ENCODE measurements at regions of chr10 and their contacts with region 1.

Region 1: DNA sequence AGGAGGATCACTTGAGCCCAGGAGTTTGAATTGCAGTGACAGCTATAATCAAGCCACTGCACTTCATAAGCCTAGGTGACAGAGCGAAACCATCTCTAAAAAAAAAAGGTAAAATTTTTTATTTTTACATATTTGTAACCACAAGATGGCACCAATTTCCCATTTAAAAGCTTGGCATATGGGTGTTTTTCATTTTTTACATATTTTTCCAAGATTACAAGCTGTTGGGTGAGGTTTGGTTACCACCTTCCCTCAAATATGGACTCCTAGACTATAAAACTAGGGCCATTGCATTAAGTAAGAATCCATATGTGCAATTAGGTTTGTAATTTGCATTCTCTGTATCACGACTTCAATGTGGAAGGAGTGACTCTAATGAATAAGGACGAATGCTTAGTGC is 129.3 kb upstream of the ACBD5 start:
- DNase-seq: peak in 1 of 4 experiments; percentile 9
- ATAC-seq: no peak
- H3K4me3 ChIP-seq: no peak overlapping the region
- H3K27ac ChIP-seq: no peak overlapping the region
- H3K4me1 ChIP-seq: no peaks in the 10 kb centered on the region
- H3K27me3 ChIP-seq: 0 out of 5 replicates have a peak, but pooled peaks cover 0 to 5% of the 10 kb centered on the region in 2 experiments
- CTCF ChIP-seq: peak in 1 of 3 experiments; percentile 47; a peak in 2 of 6 replicates
- EP300 ChIP-seq: no peak
- POLR2A ChIP-seq: no peak
- RAD21 ChIP-seq: peak; percentile 43 to 52

Region 2: GRCh38 chr10:26574783-26575182 is 795.1 kb before region 1 on chr10:
- CTCF ChIA-PET with region 1: no interaction called
- POLR2A ChIA-PET with region 1: no interaction called
- in situ Hi-C with region 1: no loop called
- intact Hi-C with region 1: no loop called
- DNase-seq: no peak
- ATAC-seq: no peak
- H3K4me3 ChIP-seq: no peak overlapping the region
- H3K27ac ChIP-seq: no peak overlapping the region
- H3K4me1 ChIP-seq: peaks cover 0 to 5% of the 10 kb centered on the region in 2 experiments; a peak in 1 of 5 replicates
- H3K27me3 ChIP-seq: peaks cover 3 to 5% of the 10 kb centered on the region in 2 experiments; a peak in 3 of 5 replicates
- CTCF ChIP-seq: no peak
- EP300 ChIP-seq: no peak
- POLR2A ChIP-seq: no peak
- RAD21 ChIP-seq: no peak

Region 3: DNA sequence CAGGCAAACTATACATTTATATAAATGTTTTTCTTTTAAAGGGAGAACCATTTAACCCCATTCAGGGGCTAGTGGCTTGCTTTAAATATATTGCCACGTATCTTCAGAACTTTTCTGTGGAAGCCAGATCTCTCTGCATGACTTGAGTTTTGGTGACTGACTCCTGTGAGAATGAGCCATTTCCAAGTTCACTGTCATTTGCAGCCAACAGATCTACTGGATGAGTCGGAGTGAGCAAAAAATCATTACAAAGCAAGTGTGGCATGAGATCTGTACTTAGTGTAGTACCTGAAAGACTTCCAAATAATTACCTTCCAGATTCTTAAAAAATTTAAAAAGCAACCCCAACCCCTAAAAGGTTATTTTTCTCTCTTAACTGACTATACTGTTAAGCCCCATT is 626.8 kb before region 1 on chr10:
- CTCF ChIA-PET with region 1: no interaction called
- POLR2A ChIA-PET with region 1: no interaction called
- in situ Hi-C with region 1: loop called (anchors 10 kb)
- intact Hi-C with region 1: no loop called
- DNase-seq: no peak
- ATAC-seq: no peak
- H3K4me3 ChIP-seq: no peak overlapping the region
- H3K27ac ChIP-seq: no peak overlapping the region
- H3K4me1 ChIP-seq: no peaks in the 10 kb centered on the region
- H3K27me3 ChIP-seq: no peaks in the 10 kb centered on the region
- CTCF ChIP-seq: no peak
- EP300 ChIP-seq: no peak
- POLR2A ChIP-seq: no peak
- RAD21 ChIP-seq: no peak

Region 4: DNA sequence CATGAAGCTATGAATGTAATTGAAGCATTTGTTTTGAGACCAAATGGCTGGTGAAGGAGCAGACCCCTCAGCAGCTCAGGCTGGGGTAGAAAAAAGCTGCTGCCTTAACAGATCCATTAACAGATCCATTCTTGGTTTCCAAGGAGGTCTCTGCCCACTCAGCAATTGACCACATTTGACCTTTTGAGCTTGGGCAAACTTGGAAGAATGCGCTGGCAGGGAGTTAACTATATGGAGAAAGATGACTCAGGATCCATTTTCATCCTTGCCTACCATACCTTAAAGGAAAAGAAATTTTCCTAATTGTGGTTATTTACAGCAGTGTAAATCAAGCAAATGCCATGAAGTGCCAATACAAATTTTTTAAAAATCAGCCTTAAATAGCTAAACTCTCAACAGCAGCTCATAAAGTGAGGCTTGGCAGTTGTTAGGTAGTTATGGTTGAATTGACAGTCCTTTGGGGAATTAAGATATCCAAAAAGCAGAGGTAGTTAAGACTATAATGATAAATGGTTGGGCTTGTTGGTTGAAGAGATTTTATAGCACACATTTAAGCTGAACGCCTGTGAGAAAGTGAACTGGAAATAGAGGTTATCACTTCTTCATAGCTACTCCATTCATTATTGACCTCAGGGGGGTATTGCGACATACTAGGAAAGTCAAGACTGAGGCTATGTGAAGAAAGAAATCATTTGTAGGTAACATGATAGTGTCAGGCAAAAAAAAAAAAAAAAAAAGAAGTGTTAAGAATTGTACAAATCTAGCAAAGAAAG is 291.8 kb after region 1 on chr10:
- CTCF ChIA-PET with region 1: interaction called, 5 read pairs
- POLR2A ChIA-PET with region 1: no interaction called
- in situ Hi-C with region 1: no loop called
- intact Hi-C with region 1: loop called (anchors 10 kb)
- DNase-seq: no peak
- ATAC-seq: no peak
- H3K4me3 ChIP-seq: no peak overlapping the region
- H3K27ac ChIP-seq: no peak overlapping the region
- H3K4me1 ChIP-seq: no peaks in the 10 kb centered on the region
- H3K27me3 ChIP-seq: peaks cover 14 to 18% of the 10 kb centered on the region in 2 experiments; a peak in 4 of 5 replicates
- CTCF ChIP-seq: no peak
- EP300 ChIP-seq: no peak
- POLR2A ChIP-seq: no peak
- RAD21 ChIP-seq: no peak

Region 5: GRCh38 chr10:28179006-28179742 is 809.3 kb after region 1 on chr10:
- CTCF ChIA-PET with region 1: no interaction called
- POLR2A ChIA-PET with region 1: no interaction called
- in situ Hi-C with region 1: no loop called
- intact Hi-C with region 1: loop called (anchors 10 kb)
- DNase-seq: peak; percentile 41 to 65 (median 42)
- ATAC-seq: peak; percentile 78
- H3K4me3 ChIP-seq: no peak overlapping the region
- H3K27ac ChIP-seq: no peak overlapping the region
- H3K4me1 ChIP-seq: no peaks in the 10 kb centered on the region
- H3K27me3 ChIP-seq: no peaks in the 10 kb centered on the region
- CTCF ChIP-seq: peak; percentile 45 to 77 (median 49); a peak in 4 of 6 replicates
- EP300 ChIP-seq: no peak
- POLR2A ChIP-seq: no peak
- RAD21 ChIP-seq: peak; percentile 79 to 81